ENCODE measurements at regions of chr2 and their contacts with region 1.

Region 1: DNA sequence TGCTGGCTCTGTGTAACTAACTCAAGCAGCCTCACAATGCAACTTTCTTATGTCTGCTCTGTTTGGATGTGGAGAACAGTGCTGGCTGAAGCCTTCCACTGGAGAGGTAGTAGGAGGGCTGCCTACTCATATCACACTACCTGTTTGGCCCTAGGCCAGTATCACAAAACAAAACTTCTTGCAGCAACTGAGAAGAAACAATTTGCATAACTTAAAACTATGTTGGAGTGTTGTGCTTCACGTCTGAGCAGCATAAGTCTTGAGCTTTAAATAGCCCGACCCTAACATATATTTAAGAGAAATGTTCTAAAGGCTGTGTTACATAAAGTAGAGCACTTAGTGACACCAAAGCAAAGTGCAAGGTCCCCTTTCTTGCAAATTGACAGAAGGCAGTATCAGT is 204.9 kb upstream of the ACVR2A start:
- DNase-seq: no peak
- H3K4me3 ChIP-seq: no peak overlapping the region
- H3K27ac ChIP-seq: no peak overlapping the region
- H3K4me1 ChIP-seq: no peaks in the 10 kb centered on the region
- H3K27me3 ChIP-seq: no peaks in the 10 kb centered on the region
- CTCF ChIP-seq: no peak
- POLR2A ChIP-seq: no peak

Region 2: DNA sequence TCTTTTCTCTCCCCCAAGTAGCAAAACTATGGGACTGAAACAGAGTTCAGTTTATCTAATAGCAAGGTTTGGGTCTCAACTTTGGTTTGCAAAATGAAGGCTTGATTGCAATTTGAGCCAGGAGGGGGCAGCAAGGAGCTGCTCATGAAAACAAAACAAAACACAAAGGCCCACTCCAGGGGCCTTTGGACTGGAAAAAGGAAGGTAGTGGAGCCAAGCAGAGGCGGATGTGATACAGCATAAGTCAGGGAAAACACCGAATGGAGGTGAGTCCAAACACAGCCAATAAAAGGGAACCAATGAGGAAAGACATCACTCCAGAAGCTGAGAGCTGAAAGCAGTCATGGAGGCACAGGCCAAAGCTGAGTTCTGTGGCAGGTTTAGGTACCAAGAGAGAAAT is 594.8 kb before region 1 on chr2:
- intact Hi-C with region 1: loop called (anchors 10 kb)
- DNase-seq: peak; percentile 16 to 28
- H3K4me3 ChIP-seq: no peak overlapping the region
- H3K27ac ChIP-seq: no peak overlapping the region
- H3K4me1 ChIP-seq: no peaks in the 10 kb centered on the region
- H3K27me3 ChIP-seq: no peaks in the 10 kb centered on the region
- CTCF ChIP-seq: peak; percentile 21 to 39 (median 32)
- POLR2A ChIP-seq: no peak

Region 3: GRCh38 chr2:147925886-147926285 is 286.0 kb after region 1 on chr2:
- intact Hi-C with region 1: no loop called
- DNase-seq: no peak
- H3K4me3 ChIP-seq: no peak overlapping the region
- H3K27ac ChIP-seq: no peak overlapping the region
- H3K4me1 ChIP-seq: no peaks in the 10 kb centered on the region
- H3K27me3 ChIP-seq: no peaks in the 10 kb centered on the region
- CTCF ChIP-seq: no peak
- POLR2A ChIP-seq: no peak

Measured in uterus (tissue), 4 donors.